GM12878 (cell line): ENCODE measurements at regions of chr3 and their contacts with region 1.

Region 1: DNA sequence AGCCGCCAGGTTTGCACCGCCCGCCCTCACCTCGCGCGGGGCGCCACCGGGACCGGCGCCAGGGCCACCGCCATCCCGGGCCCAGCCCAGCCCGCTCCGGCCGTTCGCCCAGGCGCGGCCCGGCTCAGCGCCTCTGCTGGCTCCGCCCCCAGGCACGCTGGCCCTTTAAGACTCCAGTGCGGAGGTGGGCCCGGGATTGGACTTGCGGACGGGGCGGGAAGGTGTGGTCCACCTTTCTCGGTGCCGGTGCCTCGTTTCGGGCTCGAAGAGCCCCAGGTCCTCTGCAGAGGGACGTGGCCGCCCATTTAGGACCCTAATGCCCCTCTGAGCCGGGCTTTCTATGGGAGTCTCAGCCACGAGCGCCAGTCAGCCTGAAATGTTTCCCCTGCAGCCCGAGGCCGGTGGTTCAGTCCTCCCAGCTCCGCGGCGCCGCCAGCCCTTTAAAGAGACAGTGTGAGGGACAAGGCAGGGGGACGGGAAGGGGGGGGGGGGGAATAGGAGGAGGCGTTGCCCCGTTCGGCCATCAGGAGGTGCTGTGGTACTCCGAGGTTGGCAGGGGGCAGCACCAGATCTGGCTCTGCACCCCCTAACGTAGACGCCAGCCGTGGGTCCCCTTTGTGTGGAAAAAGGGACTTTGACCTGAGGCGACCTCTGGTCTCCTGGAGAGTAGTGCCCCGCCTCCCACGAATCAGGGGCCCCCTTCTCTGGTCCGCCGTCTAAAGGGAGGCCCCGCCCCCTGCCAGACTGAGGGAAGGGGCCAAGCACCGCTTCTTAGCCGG is 1.0 kb downstream of the HYAL2 start:
- DNase-seq: peak; percentile 42
- ATAC-seq: peak; percentile 91
- H3K4me3 ChIP-seq: peak overlapping the region; percentile 70
- H3K27ac ChIP-seq: peak overlapping the region; percentile 88
- H3K4me1 ChIP-seq: peaks cover 22% of the 10 kb centered on the region
- H3K27me3 ChIP-seq: no peaks in the 10 kb centered on the region
- CTCF ChIP-seq: peak; percentile 32 to 68 (median 35); a peak in 5 of 6 replicates
- EP300 ChIP-seq: no peak
- POLR2A ChIP-seq: peak; percentile 56; the same call in 1 of the 2 replicates
- RAD21 ChIP-seq: no peak

Region 2: GRCh38 chr3:50272911-50273693 is 48.4 kb before region 1 on chr3:
- CTCF ChIA-PET with region 1: interaction called, 6 read pairs
- POLR2A ChIA-PET with region 1: no interaction called
- RAD21 ChIA-PET with region 1: interaction called, 3 read pairs
- SMC1A ChIA-PET with region 1: no interaction called
- in situ Hi-C with region 1: no loop called
- intact Hi-C with region 1: loop called (anchors 1 kb)
- DNase-seq: peak; percentile 44
- ATAC-seq: peak; percentile 95
- H3K4me3 ChIP-seq: no peak overlapping the region
- H3K27ac ChIP-seq: no peak overlapping the region
- H3K4me1 ChIP-seq: peaks cover 6% of the 10 kb centered on the region
- H3K27me3 ChIP-seq: peaks cover 7 to 8% of the 10 kb centered on the region in 2 experiments; a peak in 3 of 4 replicates
- CTCF ChIP-seq: peak; percentile 98 to 99 (median 98); a peak in 5 of 6 replicates
- EP300 ChIP-seq: no peak
- POLR2A ChIP-seq: no peak
- RAD21 ChIP-seq: peak; percentile 93

Region 3: DNA sequence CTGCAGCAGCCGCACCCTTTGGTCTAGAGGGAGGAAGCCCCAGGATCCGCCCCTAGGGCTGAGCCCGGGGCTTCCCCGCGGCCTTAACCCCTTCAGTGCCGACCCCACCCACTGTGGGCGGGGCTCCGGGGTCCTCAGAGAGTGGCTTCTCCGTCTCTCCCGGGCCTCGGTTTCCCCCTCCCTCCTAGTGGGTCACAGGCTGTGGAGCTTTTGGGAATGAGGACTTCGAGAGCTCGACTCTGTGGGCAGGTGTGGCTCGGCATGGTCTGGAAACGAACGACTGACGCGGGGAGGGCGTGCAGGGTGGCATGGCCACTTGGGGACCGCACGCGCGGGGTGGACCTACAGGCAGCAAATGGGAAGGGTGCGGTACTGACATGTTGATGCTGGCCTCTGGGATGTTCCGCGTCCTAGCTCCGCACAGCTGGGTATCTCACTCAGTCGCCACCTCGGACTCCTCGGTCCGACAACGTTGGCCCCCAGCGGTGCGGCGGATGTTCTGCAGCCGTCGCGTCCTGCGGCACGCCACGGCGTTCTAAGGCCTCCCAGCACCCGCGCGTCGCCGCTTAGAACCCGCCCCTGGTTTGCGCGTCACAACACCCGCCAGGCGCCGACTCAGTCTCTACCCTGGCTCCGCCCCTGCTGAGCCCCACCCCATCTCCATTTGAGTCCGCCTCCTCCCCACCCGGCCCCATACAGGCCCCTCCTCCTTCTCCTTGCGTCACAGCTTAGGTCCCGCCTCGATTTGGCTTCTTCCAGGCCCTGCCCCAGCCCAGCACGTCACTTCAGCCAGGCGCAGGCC is 22.5 kb before region 1 on chr3 and contains the starts of genes HYAL3 and NAA80:
- CTCF ChIA-PET with region 1: interaction called, 22 read pairs
- POLR2A ChIA-PET with region 1: interaction called, 12 read pairs
- RAD21 ChIA-PET with region 1: interaction called, 6 read pairs
- SMC1A ChIA-PET with region 1: interaction called, 4 read pairs
- in situ Hi-C with region 1: no loop called
- intact Hi-C with region 1: loop called (anchors 1 kb)
- DNase-seq: peak; percentile 98
- ATAC-seq: peak; percentile 90
- H3K4me3 ChIP-seq: peak within 1 kb of the TSS; percentile 82
- H3K27ac ChIP-seq: peak within 1 kb of the TSS; percentile 83
- H3K4me1 ChIP-seq: peaks cover 4% of the 10 kb centered on the region
- H3K27me3 ChIP-seq: no peaks in the 10 kb centered on the region
- CTCF ChIP-seq: peak; percentile 24 to 56 (median 50); a peak in 4 of 6 replicates
- EP300 ChIP-seq: no peak
- POLR2A ChIP-seq: peak; percentile 99
- RAD21 ChIP-seq: no peak
- polyA plus RNA-seq, gene HYAL3: 0.37 TPM
- polyA plus RNA-seq, gene NAA80: 0.48 to 0.62 TPM

Region 4: GRCh38 chr3:50304601-50305000 is 16.9 kb before region 1 on chr3:
- CTCF ChIA-PET with region 1: interaction called, 22 read pairs
- POLR2A ChIA-PET with region 1: interaction called, 12 read pairs
- RAD21 ChIA-PET with region 1: interaction called, 6 read pairs
- SMC1A ChIA-PET with region 1: interaction called, 4 read pairs
- in situ Hi-C with region 1: no loop called
- intact Hi-C with region 1: loop called (anchors 1 kb)
- DNase-seq: no peak
- ATAC-seq: no peak
- H3K4me3 ChIP-seq: no peak overlapping the region
- H3K27ac ChIP-seq: no peak overlapping the region
- H3K4me1 ChIP-seq: no peaks in the 10 kb centered on the region; the same call in 1 of the 2 replicates
- H3K27me3 ChIP-seq: no peaks in the 10 kb centered on the region
- CTCF ChIP-seq: no peak
- EP300 ChIP-seq: no peak
- POLR2A ChIP-seq: no peak
- RAD21 ChIP-seq: no peak